CD14-positive monocyte (primary cell): ENCODE measurements at regions of chr1 and their contacts with region 1.

Region 1: GRCh38 chr1:152623203-152623844 is 421 bp upstream of the LCE3A start:
- DNase-seq: no peak
- H3K4me3 ChIP-seq: no peak overlapping the region
- H3K4me3 Mint-ChIP-seq: peak overlapping the region in 1 of 2 donors; percentile 28
- H3K27ac ChIP-seq: no peak overlapping the region
- H3K27ac Mint-ChIP-seq: no peak overlapping the region
- H3K4me1 ChIP-seq: peaks cover 8 to 17% of the 10 kb centered on the region in 2 donors
- H3K4me1 Mint-ChIP-seq: peaks cover 21% of the 10 kb centered on the region
- H3K27me3 ChIP-seq: no peaks in the 10 kb centered on the region
- H3K27me3 Mint-ChIP-seq: peaks cover 6 to 8% (median 7%) of the 10 kb centered on the region in 3 donors
- CTCF ChIP-seq: peak; percentile 44

Region 2: DNA sequence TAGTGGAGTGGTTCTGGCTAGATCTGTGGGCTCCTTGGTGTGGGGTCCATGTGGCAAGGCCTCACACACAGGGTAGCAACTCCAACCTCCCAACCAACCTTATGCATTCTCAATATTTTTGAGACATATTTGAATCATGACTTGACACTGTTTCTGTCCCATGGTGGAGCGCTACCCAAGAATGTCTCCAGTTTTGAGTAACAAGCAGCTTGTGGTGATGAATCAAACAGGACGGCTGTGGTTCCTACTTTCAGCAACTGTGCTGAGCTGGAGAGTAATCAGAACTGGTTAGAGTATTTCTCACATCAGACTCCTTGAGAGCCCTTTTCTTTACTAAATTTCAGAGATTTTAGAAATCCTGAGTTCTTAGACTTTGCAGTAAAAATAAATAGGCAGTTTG is 46.2 kb before region 1 on chr1:
- intact Hi-C with region 1: loop called in 1 of 2 experiments (anchors 10 kb)
- DNase-seq: no peak
- H3K4me3 ChIP-seq: no peak overlapping the region
- H3K4me3 Mint-ChIP-seq: no peak overlapping the region
- H3K27ac ChIP-seq: no peak overlapping the region
- H3K27ac Mint-ChIP-seq: no peak overlapping the region
- H3K4me1 ChIP-seq: no peaks in the 10 kb centered on the region
- H3K4me1 Mint-ChIP-seq: no peaks in the 10 kb centered on the region
- H3K27me3 ChIP-seq: no peaks in the 10 kb centered on the region
- H3K27me3 Mint-ChIP-seq: peaks cover 4 to 11% (median 6%) of the 10 kb centered on the region in 3 donors
- CTCF ChIP-seq: no peak

Region 3: GRCh38 chr1:152801333-152801732 is 178.0 kb after region 1 on chr1:
- intact Hi-C with region 1: no loop called
- DNase-seq: no peak
- H3K4me3 ChIP-seq: no peak overlapping the region
- H3K4me3 Mint-ChIP-seq: no peak overlapping the region
- H3K27ac ChIP-seq: no peak overlapping the region
- H3K27ac Mint-ChIP-seq: no peak overlapping the region
- H3K4me1 ChIP-seq: no peaks in the 10 kb centered on the region
- H3K4me1 Mint-ChIP-seq: no peaks in the 10 kb centered on the region
- H3K27me3 ChIP-seq: no peaks in the 10 kb centered on the region
- H3K27me3 Mint-ChIP-seq: peaks cover 2 to 14% (median 9%) of the 10 kb centered on the region in 3 donors
- CTCF ChIP-seq: no peak

Region 4: GRCh38 chr1:152926091-152926490 is 302.8 kb after region 1 on chr1:
- intact Hi-C with region 1: no loop called
- DNase-seq: no peak
- H3K4me3 ChIP-seq: no peak overlapping the region
- H3K4me3 Mint-ChIP-seq: no peak overlapping the region
- H3K27ac ChIP-seq: no peak overlapping the region
- H3K27ac Mint-ChIP-seq: no peak overlapping the region
- H3K4me1 ChIP-seq: no peaks in the 10 kb centered on the region
- H3K4me1 Mint-ChIP-seq: no peaks in the 10 kb centered on the region
- H3K27me3 ChIP-seq: peaks cover 0 to 2% of the 10 kb centered on the region in 2 donors
- H3K27me3 Mint-ChIP-seq: peaks cover 3 to 5% (median 4%) of the 10 kb centered on the region in 3 donors
- CTCF ChIP-seq: no peak